Activated T-helper 1 cell treated with anti-CD3 and anti-CD28 coated beads, Interleukin-12 subunit alpha, Interleukin-12 subunit beta, Interleukin-2, Interleukin-4 antibody, amounts not matched to agents 30 ng/mL and 10 ng/mL and 1 ng/mL, durations not matched to agents 14 hours and 24 hours and 36 hours (primary cell): ENCODE measurements at regions of chr9 and their contacts with region 1.

Region 1: GRCh38 chr9:114108016-114108833 is 9.1 kb upstream of the KIF12 start:
- DNase-seq: peak; percentile 42
- H3K4me3 Mint-ChIP-seq: no peak overlapping the region
- H3K27ac Mint-ChIP-seq: no peak overlapping the region
- H3K4me1 Mint-ChIP-seq: no peaks in the 10 kb centered on the region
- H3K27me3 Mint-ChIP-seq: peaks cover 28% of the 10 kb centered on the region

Region 2: GRCh38 chr9:113963017-113963620 is 145.1 kb before region 1 on chr9:
- intact Hi-C with region 1: no loop called
- DNase-seq: no peak
- H3K4me3 Mint-ChIP-seq: no peak overlapping the region
- H3K27ac Mint-ChIP-seq: no peak overlapping the region
- H3K4me1 Mint-ChIP-seq: no peaks in the 10 kb centered on the region
- H3K27me3 Mint-ChIP-seq: no peaks in the 10 kb centered on the region

Region 3: DNA sequence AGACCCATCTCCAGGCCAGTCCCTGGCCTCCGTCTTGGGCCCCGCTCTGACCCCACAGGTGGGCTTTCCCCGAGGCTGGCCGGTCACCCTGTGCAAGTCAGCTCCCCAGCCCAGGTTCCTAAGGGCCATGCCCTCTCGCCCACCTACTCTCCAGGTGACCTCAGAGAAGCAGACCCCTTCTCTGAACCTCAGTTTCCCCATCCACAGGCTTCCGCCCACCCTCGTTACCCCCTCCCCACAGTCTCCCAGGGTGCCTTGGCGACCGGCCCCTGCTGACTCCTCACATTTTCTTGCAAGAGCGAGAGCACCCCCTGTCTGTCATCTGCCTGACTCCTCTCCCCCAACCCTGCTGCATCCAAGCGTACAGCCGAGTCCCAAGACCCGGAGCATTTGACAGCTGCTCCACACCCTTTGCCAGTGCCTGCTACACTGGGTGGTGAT is 163.4 kb after region 1 on chr9:
- intact Hi-C with region 1: loop called (anchors 1 kb)
- DNase-seq: no peak
- H3K4me3 Mint-ChIP-seq: no peak overlapping the region
- H3K27ac Mint-ChIP-seq: no peak overlapping the region
- H3K4me1 Mint-ChIP-seq: no peaks in the 10 kb centered on the region
- H3K27me3 Mint-ChIP-seq: no peaks in the 10 kb centered on the region

Region 4: DNA sequence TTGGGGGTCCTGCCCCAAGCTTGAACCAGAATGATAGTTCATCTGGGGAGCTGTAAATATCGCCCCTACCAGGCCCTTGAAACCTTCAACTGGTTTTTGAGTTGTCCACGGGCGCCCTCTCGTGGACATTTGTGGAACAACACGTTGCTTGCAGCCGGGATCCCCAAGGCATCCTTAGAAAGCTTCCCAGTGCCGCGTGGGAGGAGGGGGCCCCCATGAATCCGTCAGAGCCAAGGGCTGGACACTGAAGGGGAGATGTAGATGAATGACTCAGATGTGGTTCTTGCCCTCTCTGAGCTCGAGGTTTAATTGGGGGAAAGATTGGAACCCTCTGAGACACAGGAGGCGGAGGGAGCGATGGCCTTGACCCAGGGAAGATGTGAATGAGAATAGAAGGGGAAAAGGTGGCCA is 182.8 kb after region 1 on chr9:
- intact Hi-C with region 1: loop called (anchors 1 kb)
- DNase-seq: peak; percentile 52
- H3K4me3 Mint-ChIP-seq: no peak overlapping the region
- H3K27ac Mint-ChIP-seq: no peak overlapping the region
- H3K4me1 Mint-ChIP-seq: no peaks in the 10 kb centered on the region
- H3K27me3 Mint-ChIP-seq: peaks cover 4% of the 10 kb centered on the region

Region 5: DNA sequence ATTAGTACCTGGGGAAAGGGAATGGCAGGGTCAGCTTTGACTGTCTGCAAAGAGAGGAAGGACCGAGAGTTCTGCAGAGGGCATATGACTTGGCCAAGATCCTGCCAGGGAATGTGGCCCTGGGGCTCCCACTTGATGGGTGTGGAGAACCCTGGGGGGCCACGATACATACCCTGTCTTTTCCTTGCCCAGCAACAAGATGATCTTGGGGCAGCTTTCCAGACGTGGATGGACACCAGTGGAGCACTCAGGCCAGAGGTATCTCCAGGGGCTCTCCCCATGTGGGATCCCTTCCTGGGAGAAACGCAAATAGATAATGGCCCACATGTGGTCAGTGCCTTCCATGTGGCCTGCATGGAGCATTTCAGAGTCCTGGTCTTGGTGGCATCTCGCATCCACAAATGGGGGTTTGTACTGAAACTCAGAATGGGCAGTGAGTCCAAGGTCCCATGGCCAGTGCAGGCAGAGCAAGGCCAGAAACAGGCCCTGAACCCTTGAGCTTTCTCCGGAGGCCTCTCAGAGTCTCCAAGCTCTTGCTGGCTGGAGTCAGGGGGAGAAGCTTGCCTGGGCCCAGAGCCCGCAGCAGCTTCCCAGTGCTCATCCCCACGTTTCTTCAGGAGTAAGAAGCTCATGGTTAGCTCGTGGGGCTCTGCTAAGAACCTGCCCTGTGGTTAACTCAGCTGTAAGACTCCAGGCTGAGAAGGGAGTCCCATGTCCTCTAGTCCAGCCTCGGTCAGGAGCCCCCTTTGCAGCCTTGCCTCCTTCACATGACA is 196.4 kb after region 1 on chr9:
- intact Hi-C with region 1: loop called (anchors 1 kb)
- DNase-seq: no peak
- H3K4me3 Mint-ChIP-seq: no peak overlapping the region
- H3K27ac Mint-ChIP-seq: no peak overlapping the region
- H3K4me1 Mint-ChIP-seq: no peaks in the 10 kb centered on the region
- H3K27me3 Mint-ChIP-seq: no peaks in the 10 kb centered on the region